CD14-positive monocyte (primary cell): ENCODE measurements at regions of chr19 and their contacts with region 1.

Region 1: DNA sequence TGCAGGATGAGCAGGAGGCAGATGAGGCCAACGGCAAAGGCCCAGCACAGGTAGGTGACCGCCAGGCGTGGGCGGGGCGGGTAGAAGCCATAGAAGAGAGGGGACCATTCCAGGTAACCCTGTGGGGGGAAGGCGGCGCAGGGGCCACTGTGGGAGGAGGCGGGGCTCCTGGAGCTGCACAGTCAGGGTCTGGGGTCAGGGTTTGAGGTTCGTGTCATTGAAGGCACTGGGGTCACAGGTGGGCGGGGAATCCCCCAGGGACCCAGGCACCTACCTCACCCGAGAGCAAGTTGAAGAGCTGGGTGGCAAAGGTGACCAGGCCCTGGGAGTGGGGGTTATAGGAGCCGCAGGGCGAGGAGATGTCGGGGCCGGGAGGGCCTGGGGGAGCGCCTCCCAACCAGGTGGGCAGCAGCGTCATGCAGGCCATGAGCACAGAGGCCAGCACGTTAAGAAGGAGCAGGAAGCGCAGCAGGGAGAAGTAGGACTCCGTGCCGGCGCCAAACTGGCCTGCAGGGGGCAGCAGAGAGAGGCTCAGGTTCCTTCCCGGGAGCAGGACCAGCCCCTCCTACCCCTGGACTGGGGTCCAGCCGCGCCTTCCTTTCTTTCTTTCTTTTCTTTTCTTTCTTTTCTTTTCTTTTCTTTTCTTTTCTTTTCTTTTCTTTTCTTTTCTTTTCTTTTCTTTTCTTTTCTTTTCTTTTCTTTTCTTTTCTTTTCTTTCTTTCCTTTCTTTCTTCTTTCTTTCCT is 4.6 kb downstream of the TMC4 start:
- DNase-seq: peak; percentile 79 to 87 (median 86)
- H3K4me3 ChIP-seq: no peak overlapping the region
- H3K4me3 Mint-ChIP-seq: peak overlapping the region in 1 of 2 donors; percentile 46
- H3K27ac ChIP-seq: no peak overlapping the region
- H3K27ac Mint-ChIP-seq: peak overlapping the region in 2 of 7 donors; percentile 16 to 36
- H3K4me1 ChIP-seq: peaks cover 33 to 44% of the 10 kb centered on the region in 2 donors
- H3K4me1 Mint-ChIP-seq: peaks cover 31% of the 10 kb centered on the region
- H3K27me3 ChIP-seq: peaks cover 0 to 10% of the 10 kb centered on the region in 2 donors
- H3K27me3 Mint-ChIP-seq: peaks cover 6 to 34% (median 17%) of the 10 kb centered on the region in 3 donors
- CTCF ChIP-seq: peak; percentile 76

Region 2: DNA sequence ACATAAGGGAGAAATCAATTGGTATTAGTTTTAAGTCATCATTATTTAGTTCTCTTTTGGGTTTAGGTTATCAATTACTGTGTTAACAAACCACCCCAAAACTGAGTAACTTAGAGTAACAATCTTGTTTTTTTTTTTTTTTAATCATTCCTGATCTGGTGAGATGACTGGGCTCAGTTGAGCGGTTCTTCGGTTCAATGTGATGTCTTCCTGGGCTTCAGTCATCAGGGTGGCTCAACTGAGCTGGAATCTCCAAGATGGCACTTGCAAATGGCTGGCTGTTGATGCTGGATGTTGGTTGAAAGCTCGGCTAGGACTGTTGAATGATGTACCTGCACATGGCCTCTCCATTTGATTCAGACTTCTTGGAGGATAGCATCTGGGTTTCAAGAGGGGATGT is 83.9 kb before region 1 on chr19:
- intact Hi-C with region 1: no loop called
- DNase-seq: no peak
- H3K4me3 ChIP-seq: no peak overlapping the region
- H3K4me3 Mint-ChIP-seq: no peak overlapping the region
- H3K27ac ChIP-seq: no peak overlapping the region
- H3K27ac Mint-ChIP-seq: no peak overlapping the region
- H3K4me1 ChIP-seq: peaks cover 7 to 12% of the 10 kb centered on the region in 2 donors
- H3K4me1 Mint-ChIP-seq: peaks cover 9% of the 10 kb centered on the region
- H3K27me3 ChIP-seq: no peaks in the 10 kb centered on the region
- H3K27me3 Mint-ChIP-seq: peaks cover 4 to 17% (median 17%) of the 10 kb centered on the region in 3 donors
- CTCF ChIP-seq: no peak

Region 3: GRCh38 chr19:54203151-54203611 is 34.8 kb after region 1 on chr19:
- intact Hi-C with region 1: loop called in 1 of 2 experiments (anchors 5 kb)
- DNase-seq: no peak
- H3K4me3 ChIP-seq: peak overlapping the region; percentile 83 to 99 (median 91)
- H3K4me3 Mint-ChIP-seq: peak overlapping the region; percentile 100
- H3K27ac ChIP-seq: peak overlapping the region; percentile 57 to 97
- H3K27ac Mint-ChIP-seq: peak overlapping the region; percentile 91 to 100 (median 100)
- H3K4me1 ChIP-seq: peaks cover 72 to 74% of the 10 kb centered on the region in 2 donors
- H3K4me1 Mint-ChIP-seq: peaks cover 64% of the 10 kb centered on the region
- H3K27me3 ChIP-seq: no peaks in the 10 kb centered on the region
- H3K27me3 Mint-ChIP-seq: no peaks in the 10 kb centered on the region
- CTCF ChIP-seq: no peak

Region 4: GRCh38 chr19:54231077-54231931 is 63.0 kb after region 1 on chr19:
- intact Hi-C with region 1: loop called (anchors 2 to 5 kb)
- DNase-seq: peak; percentile 57 to 88 (median 83)
- H3K4me3 ChIP-seq: no peak overlapping the region
- H3K4me3 Mint-ChIP-seq: peak overlapping the region in 1 of 2 donors; percentile 26
- H3K27ac ChIP-seq: no peak overlapping the region
- H3K27ac Mint-ChIP-seq: peak overlapping the region in 5 of 7 donors; percentile 46 to 88 (median 67)
- H3K4me1 ChIP-seq: peaks cover 14 to 20% of the 10 kb centered on the region in 2 donors
- H3K4me1 Mint-ChIP-seq: peaks cover 21% of the 10 kb centered on the region
- H3K27me3 ChIP-seq: peaks cover 0 to 13% of the 10 kb centered on the region in 2 donors
- H3K27me3 Mint-ChIP-seq: peaks cover 6 to 8% (median 7%) of the 10 kb centered on the region in 3 donors
- CTCF ChIP-seq: peak; percentile 89

Region 5: GRCh38 chr19:54325194-54325621 is 156.9 kb after region 1 on chr19:
- intact Hi-C with region 1: loop called in 1 of 2 experiments (anchors 5 kb)
- DNase-seq: peak; percentile 55 to 72 (median 63)
- H3K4me3 ChIP-seq: no peak overlapping the region
- H3K4me3 Mint-ChIP-seq: peak overlapping the region in 1 of 2 donors; percentile 30
- H3K27ac ChIP-seq: no peak overlapping the region
- H3K27ac Mint-ChIP-seq: peak overlapping the region in 2 of 7 donors; percentile 57 to 68
- H3K4me1 ChIP-seq: peaks cover 12 to 21% of the 10 kb centered on the region in 2 donors
- H3K4me1 Mint-ChIP-seq: peaks cover 23% of the 10 kb centered on the region
- H3K27me3 ChIP-seq: no peaks in the 10 kb centered on the region
- H3K27me3 Mint-ChIP-seq: peaks cover 3% of the 10 kb centered on the region in 3 donors
- CTCF ChIP-seq: peak; percentile 95